ENCODE measurements at regions of chr11 and their contacts with region 1.

Region 1: GRCh38 chr11:94623120-94623735 is 56.1 kb downstream of the PIWIL4 start:
- H3K4me3 ChIP-seq: no peak overlapping the region
- H3K27ac ChIP-seq: no peak overlapping the region
- H3K4me1 ChIP-seq: no peaks in the 10 kb centered on the region
- CTCF ChIP-seq: peak; percentile 81

Region 2: DNA sequence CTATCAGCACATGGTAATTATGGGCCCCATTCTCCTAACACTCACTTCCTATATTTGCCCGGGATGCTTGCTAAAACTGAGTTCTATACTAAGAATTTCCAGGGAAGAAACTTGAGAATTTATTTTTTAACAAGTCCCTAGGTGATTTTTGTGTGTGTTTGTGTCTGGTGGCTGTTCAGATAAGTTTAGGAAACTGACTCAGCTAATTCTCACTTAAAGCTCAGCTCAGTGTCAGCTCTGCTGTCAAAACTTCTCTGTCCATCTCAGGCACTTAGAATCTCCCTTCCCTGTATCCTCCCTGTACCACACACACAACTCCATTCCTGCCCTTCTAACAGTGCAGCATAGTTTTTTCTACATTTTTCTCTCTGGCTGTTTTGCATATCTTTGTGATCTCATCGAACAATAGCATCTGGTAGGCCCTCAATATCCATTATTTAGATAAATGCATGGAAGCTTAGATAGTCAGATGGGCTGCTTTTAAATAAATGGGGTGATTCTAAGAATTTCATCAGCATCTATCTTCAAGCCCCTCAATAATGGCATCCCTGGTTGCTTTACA is 13.2 kb after region 1 on chr11:
- CTCF ChIA-PET with region 1: interaction called, 11 read pairs
- POLR2A ChIA-PET with region 1: no interaction called
- H3K4me3 ChIP-seq: no peak overlapping the region
- H3K27ac ChIP-seq: no peak overlapping the region
- H3K4me1 ChIP-seq: no peaks in the 10 kb centered on the region
- CTCF ChIP-seq: no peak

Region 3: GRCh38 chr11:94767761-94768601 is 144.8 kb after region 1 on chr11 and contains the start of gene AMOTL1:
- CTCF ChIA-PET with region 1: interaction called, 92 read pairs
- POLR2A ChIA-PET with region 1: interaction called, 4 read pairs
- H3K4me3 ChIP-seq: peak within 1 kb of the TSS; percentile 70
- H3K27ac ChIP-seq: peak within 1 kb of the TSS; percentile 88
- H3K4me1 ChIP-seq: 0 out of 2 replicates have a peak, but pooled peaks cover 2% of the 10 kb centered on the region
- CTCF ChIP-seq: no peak

Region 4: GRCh38 chr11:94885133-94885532 is 261.9 kb after region 1 on chr11:
- CTCF ChIA-PET with region 1: interaction called, 15 read pairs
- POLR2A ChIA-PET with region 1: no interaction called
- H3K4me3 ChIP-seq: no peak overlapping the region
- H3K27ac ChIP-seq: no peak overlapping the region
- H3K4me1 ChIP-seq: no peaks in the 10 kb centered on the region
- CTCF ChIP-seq: no peak

Region 5: DNA sequence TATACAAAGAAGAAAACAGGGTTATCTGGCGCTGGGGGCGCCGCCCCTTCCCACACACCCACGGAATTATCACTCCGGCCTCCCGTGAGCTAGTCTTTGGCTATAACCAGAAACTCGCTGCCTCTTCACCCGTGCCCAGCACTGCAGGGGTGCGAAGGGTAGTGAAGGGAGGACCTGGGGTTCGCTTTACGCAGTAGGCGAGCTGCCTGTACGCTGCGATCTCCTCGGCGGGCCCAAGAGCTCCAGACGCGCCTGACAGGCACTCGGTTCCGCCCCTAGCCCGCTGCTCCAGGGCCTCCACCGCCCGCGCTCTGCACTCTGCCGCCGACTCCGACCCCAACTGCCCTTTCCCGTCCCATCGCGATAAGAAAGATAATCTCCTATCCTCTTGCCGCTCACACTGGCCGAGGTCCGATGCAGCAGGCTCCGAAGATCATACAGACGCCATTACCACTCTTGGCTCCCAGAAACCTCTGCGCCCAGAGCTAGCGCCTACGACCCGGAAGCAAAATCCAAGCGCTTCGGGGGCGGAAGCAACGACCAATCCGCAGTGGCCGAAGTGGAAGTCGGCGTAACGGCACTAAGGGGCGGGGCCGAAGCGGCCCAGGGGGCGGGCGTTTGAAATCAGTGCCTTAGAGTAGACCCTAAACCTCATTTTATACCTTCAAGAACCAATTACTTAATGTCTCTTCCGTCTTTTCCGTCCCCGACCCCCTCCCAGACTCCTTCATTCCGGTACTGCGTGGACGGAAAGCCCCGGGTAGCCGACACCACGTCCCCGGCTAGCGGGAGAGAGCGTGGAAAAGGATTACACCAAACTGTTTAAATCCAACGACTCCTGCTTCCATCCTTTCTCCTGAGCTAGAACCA is 350.1 kb after region 1 on chr11 and contains the starts of genes CWC15 and KDM4D:
- CTCF ChIA-PET with region 1: interaction called, 38 read pairs
- POLR2A ChIA-PET with region 1: no interaction called
- H3K4me3 ChIP-seq: peak within 1 kb of the TSS; percentile 76
- H3K27ac ChIP-seq: peak within 1 kb of the TSS; percentile 57
- H3K4me1 ChIP-seq: no peaks in the 10 kb centered on the region; the same call in 1 of the 2 replicates
- CTCF ChIP-seq: no peak